CD8-positive, alpha-beta T cell (primary cell): ENCODE measurements at regions of chr1 and their contacts with region 1.

Region 1: GRCh38 chr1:5389101-5389885 is 602.9 kb downstream of the NPHP4 start:
- DNase-seq: peak in 7 of 9 experiments; percentile 10 to 84 (median 51)
- ATAC-seq: peak; percentile 83
- H3K4me3 ChIP-seq: peak overlapping the region; percentile 24 to 30
- H3K4me3 Mint-ChIP-seq: peak overlapping the region; percentile 85
- H3K27ac ChIP-seq: peak overlapping the region; percentile 35 to 51
- H3K27ac Mint-ChIP-seq: peak overlapping the region; percentile 96
- H3K4me1 ChIP-seq: peaks cover 52% of the 10 kb centered on the region
- H3K4me1 Mint-ChIP-seq: peaks cover 43% of the 10 kb centered on the region
- H3K27me3 ChIP-seq: no peaks in the 10 kb centered on the region
- H3K27me3 Mint-ChIP-seq: no peaks in the 10 kb centered on the region
- CTCF ChIP-seq: no peak

Region 2: DNA sequence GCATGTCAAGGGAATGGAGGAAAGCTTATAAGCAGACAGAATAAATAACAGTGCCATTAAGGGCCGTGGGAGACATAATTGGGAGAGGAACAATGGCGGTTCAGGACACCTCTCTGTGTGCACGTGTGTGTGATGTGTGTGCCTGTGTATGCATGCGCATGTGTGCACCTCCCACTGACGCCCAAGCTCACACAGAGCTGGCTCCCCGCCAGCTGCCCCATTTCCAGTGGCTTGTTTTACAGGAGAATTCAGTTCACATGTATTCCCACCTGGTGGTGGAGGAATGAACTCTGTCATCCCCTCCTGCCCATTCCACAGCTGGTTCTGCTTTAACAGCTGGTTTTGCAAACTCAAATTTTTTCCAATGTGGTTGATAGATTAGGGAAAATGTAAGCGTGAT is 472.7 kb before region 1 on chr1:
- CTCF ChIA-PET with region 1: no interaction called
- POLR2A ChIA-PET with region 1: no interaction called
- intact Hi-C with region 1: no loop called
- DNase-seq: no peak
- ATAC-seq: no peak
- H3K4me3 ChIP-seq: no peak overlapping the region
- H3K4me3 Mint-ChIP-seq: no peak overlapping the region
- H3K27ac ChIP-seq: no peak overlapping the region
- H3K27ac Mint-ChIP-seq: no peak overlapping the region
- H3K4me1 ChIP-seq: no peaks in the 10 kb centered on the region
- H3K4me1 Mint-ChIP-seq: no peaks in the 10 kb centered on the region
- H3K27me3 ChIP-seq: no peaks in the 10 kb centered on the region
- H3K27me3 Mint-ChIP-seq: no peaks in the 10 kb centered on the region
- CTCF ChIP-seq: no peak

Region 3: DNA sequence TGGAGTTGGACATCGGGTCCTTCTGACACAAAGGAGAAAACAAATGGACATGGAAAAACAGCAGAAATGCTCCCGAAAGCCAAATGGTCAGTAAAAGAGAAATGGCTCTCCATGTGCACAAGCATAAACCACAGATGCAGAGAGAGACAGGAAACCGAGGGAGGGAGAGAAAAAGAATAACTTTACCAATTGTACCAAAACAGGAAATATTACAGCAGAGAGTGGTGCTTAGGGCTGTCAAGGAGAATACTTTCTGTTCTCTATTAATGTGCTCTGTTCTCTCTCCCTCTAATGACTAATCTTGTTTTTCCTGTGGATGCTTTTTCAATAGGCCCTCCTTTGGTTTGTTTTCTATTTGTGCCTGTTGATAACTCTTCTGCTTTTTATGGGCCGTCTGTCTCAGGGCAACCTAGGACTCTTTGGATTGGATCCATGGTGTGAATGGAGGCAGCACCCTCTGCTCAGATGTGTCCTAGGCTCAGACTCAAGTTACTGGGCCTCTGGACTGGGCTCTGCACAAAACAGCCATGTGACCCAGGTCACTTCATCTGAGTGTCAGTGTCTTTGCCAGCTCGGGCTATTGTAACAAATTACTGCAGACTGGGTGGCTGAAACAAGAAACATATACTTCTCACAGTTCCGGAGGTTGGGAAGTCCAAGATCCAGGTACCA is 60.1 kb before region 1 on chr1:
- CTCF ChIA-PET with region 1: no interaction called
- POLR2A ChIA-PET with region 1: interaction called, 4 read pairs
- intact Hi-C with region 1: loop called in 1 of 2 experiments (anchors 5 kb)
- DNase-seq: peak in 2 of 9 experiments; percentile 35 to 62
- ATAC-seq: no peak
- H3K4me3 ChIP-seq: peak overlapping the region in 1 of 2 experiments; percentile 16
- H3K4me3 Mint-ChIP-seq: peak overlapping the region; percentile 57
- H3K27ac ChIP-seq: peak overlapping the region; percentile 55 to 87
- H3K27ac Mint-ChIP-seq: peak overlapping the region; percentile 96
- H3K4me1 ChIP-seq: peaks cover 41% of the 10 kb centered on the region
- H3K4me1 Mint-ChIP-seq: peaks cover 58% of the 10 kb centered on the region
- H3K27me3 ChIP-seq: no peaks in the 10 kb centered on the region
- H3K27me3 Mint-ChIP-seq: no peaks in the 10 kb centered on the region
- CTCF ChIP-seq: no peak

Region 4: GRCh38 chr1:5364591-5364990 is 24.7 kb before region 1 on chr1:
- CTCF ChIA-PET with region 1: no interaction called
- POLR2A ChIA-PET with region 1: no interaction called
- intact Hi-C with region 1: no loop called
- DNase-seq: no peak
- ATAC-seq: no peak
- H3K4me3 ChIP-seq: no peak overlapping the region
- H3K4me3 Mint-ChIP-seq: no peak overlapping the region
- H3K27ac ChIP-seq: no peak overlapping the region
- H3K27ac Mint-ChIP-seq: no peak overlapping the region
- H3K4me1 ChIP-seq: no peaks in the 10 kb centered on the region
- H3K4me1 Mint-ChIP-seq: peaks cover 5% of the 10 kb centered on the region
- H3K27me3 ChIP-seq: no peaks in the 10 kb centered on the region
- H3K27me3 Mint-ChIP-seq: no peaks in the 10 kb centered on the region
- CTCF ChIP-seq: no peak